Activated CD8-positive, alpha-beta T cell treated with anti-CD3 and anti-CD28 coated beads for 36 hours (primary cell): ENCODE measurements at regions of chr17 and their contacts with region 1.

Region 1: GRCh38 chr17:27236717-27237315 is 57.1 kb upstream of the WSB1 start:
- DNase-seq: peak; percentile 91
- ATAC-seq: peak; percentile 77
- H3K4me3 Mint-ChIP-seq: no peak overlapping the region
- H3K27ac Mint-ChIP-seq: no peak overlapping the region
- H3K4me1 Mint-ChIP-seq: peaks cover 16% of the 10 kb centered on the region
- H3K27me3 Mint-ChIP-seq: peaks cover 3% of the 10 kb centered on the region
- CTCF ChIP-seq: peak; percentile 83

Region 2: GRCh38 chr17:27049104-27049784 is 187.6 kb before region 1 on chr17:
- CTCF ChIA-PET with region 1: no interaction called
- POLR2A ChIA-PET with region 1: no interaction called
- intact Hi-C with region 1: no loop called
- DNase-seq: peak; percentile 46
- ATAC-seq: peak; percentile 64
- H3K4me3 Mint-ChIP-seq: no peak overlapping the region
- H3K27ac Mint-ChIP-seq: no peak overlapping the region
- H3K4me1 Mint-ChIP-seq: no peaks in the 10 kb centered on the region
- H3K27me3 Mint-ChIP-seq: peaks cover 3% of the 10 kb centered on the region
- CTCF ChIP-seq: no peak

Region 3: DNA sequence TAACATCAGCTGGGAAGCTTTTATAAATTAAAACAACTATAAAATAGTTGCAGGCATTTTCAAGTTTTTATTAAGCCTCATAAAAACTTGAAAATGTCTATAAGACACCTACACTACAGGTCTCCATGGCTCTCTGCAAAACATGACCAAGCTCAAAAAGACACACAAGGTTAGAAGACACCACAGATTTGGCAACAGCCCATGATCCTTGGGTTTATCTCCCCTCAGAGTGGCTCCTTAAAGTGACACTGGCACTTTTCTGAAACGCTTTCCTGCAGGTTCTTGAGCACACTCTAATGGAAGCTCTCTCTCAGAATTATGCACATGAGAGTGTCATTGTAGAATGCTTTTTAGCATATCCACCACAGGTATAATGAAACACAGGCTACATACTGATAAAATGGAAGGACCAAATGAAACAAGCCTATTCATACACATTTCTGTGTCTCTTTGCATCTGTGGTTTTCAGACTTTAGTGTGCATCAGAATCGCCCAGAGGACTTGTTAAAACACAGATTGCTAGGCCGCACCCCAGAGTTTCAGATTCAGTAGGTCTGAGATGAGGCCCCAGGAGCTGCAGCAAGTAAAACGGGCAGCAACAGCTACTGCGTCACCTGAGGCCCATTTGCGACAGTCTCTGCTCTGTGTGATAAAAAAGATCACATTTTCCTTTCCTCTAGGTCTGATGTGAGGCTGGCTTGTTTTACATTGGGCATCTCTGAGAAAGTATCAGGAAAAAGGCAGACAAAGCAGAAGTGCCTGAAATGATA is 17.9 kb before region 1 on chr17:
- CTCF ChIA-PET with region 1: interaction called, 14 read pairs
- POLR2A ChIA-PET with region 1: no interaction called
- intact Hi-C with region 1: no loop called
- DNase-seq: peak; percentile 56
- ATAC-seq: peak; percentile 90
- H3K4me3 Mint-ChIP-seq: no peak overlapping the region
- H3K27ac Mint-ChIP-seq: no peak overlapping the region
- H3K4me1 Mint-ChIP-seq: peaks cover 10% of the 10 kb centered on the region
- H3K27me3 Mint-ChIP-seq: no peaks in the 10 kb centered on the region
- CTCF ChIP-seq: no peak

Region 4: GRCh38 chr17:27332485-27333409 is 95.9 kb after region 1 on chr17:
- CTCF ChIA-PET with region 1: interaction called, 149 read pairs
- POLR2A ChIA-PET with region 1: interaction called, 7 read pairs
- intact Hi-C with region 1: no loop called
- DNase-seq: peak; percentile 97
- ATAC-seq: peak; percentile 88
- H3K4me3 Mint-ChIP-seq: peak overlapping the region; percentile 81
- H3K27ac Mint-ChIP-seq: peak overlapping the region; percentile 94
- H3K4me1 Mint-ChIP-seq: peaks cover 25% of the 10 kb centered on the region
- H3K27me3 Mint-ChIP-seq: no peaks in the 10 kb centered on the region
- CTCF ChIP-seq: peak; percentile 86

Region 5: GRCh38 chr17:27353461-27354050 is 116.7 kb after region 1 on chr17:
- CTCF ChIA-PET with region 1: interaction called, 16 read pairs
- POLR2A ChIA-PET with region 1: no interaction called
- intact Hi-C with region 1: no loop called
- DNase-seq: peak; percentile 90
- ATAC-seq: peak; percentile 88
- H3K4me3 Mint-ChIP-seq: peak overlapping the region; percentile 78
- H3K27ac Mint-ChIP-seq: peak overlapping the region; percentile 96
- H3K4me1 Mint-ChIP-seq: peaks cover 25% of the 10 kb centered on the region
- H3K27me3 Mint-ChIP-seq: no peaks in the 10 kb centered on the region
- CTCF ChIP-seq: peak; percentile 90

Region 6: DNA sequence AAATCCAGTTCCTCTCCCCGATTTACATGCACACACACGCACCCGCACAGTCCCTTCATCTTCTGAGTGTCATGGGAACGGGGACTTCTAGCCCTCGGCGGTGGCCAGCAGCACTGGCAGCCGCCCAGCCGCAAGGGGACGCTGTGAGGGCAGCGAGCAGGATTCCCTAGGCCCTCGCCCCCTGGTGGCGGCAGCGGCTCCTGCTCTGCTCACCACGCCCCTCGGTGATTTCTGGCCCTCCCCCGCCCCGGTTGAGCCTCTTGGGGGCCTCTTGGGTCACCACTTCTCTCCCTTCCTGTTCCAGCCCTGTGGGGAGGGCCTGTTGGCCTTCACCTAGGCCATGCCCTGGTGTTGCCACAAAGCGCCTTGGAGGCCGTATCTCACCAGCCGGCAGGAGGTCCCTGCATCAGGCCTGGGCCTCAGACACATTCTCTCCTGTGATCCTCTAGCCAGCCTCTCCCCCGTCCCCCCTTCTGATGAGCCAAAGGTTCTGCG is 144.2 kb after region 1 on chr17:
- CTCF ChIA-PET with region 1: interaction called, 32 read pairs
- POLR2A ChIA-PET with region 1: no interaction called
- intact Hi-C with region 1: no loop called
- DNase-seq: peak; percentile 91
- ATAC-seq: peak; percentile 98
- H3K4me3 Mint-ChIP-seq: no peak overlapping the region
- H3K27ac Mint-ChIP-seq: no peak overlapping the region
- H3K4me1 Mint-ChIP-seq: no peaks in the 10 kb centered on the region
- H3K27me3 Mint-ChIP-seq: peaks cover 11% of the 10 kb centered on the region
- CTCF ChIP-seq: peak; percentile 100

Region 7: DNA sequence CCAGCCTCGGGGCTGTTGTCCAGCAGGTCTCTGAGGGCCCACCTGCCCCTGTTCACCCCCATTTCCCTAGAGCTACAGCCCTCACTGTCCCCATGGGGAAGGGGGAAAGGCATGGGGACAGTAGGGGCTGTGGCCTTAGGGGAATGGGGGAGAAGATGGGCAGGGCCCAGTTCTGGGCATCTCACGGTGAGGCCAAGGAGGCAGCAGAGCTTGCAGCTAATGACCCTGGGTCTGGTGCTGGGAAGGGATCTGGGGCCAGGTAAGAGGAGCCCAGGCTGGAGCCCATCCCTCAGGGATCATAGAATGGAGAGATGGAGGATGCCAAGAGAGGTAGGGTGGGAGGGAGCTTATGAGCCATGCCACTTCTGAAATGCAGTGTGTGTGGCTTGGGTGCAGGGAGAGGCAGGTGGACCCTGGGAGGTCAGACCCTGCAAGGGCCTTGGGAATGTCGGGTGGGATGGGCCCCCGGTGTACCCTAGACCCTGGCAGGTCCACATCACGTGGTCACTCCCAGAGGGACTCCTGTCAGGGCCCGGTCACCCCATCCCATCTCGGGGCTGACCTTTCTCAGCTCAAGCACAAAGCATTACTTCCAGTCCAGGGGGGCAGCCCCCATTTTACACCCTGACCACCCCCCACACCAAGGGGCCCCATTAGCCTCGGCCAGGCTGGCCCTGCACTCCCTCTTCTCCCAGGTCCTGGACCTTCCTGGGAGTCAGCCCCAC is 183.6 kb after region 1 on chr17:
- CTCF ChIA-PET with region 1: no interaction called
- POLR2A ChIA-PET with region 1: no interaction called
- intact Hi-C with region 1: no loop called
- DNase-seq: no peak
- ATAC-seq: no peak
- H3K4me3 Mint-ChIP-seq: no peak overlapping the region
- H3K27ac Mint-ChIP-seq: no peak overlapping the region
- H3K4me1 Mint-ChIP-seq: no peaks in the 10 kb centered on the region
- H3K27me3 Mint-ChIP-seq: no peaks in the 10 kb centered on the region
- CTCF ChIP-seq: no peak

Region 8: DNA sequence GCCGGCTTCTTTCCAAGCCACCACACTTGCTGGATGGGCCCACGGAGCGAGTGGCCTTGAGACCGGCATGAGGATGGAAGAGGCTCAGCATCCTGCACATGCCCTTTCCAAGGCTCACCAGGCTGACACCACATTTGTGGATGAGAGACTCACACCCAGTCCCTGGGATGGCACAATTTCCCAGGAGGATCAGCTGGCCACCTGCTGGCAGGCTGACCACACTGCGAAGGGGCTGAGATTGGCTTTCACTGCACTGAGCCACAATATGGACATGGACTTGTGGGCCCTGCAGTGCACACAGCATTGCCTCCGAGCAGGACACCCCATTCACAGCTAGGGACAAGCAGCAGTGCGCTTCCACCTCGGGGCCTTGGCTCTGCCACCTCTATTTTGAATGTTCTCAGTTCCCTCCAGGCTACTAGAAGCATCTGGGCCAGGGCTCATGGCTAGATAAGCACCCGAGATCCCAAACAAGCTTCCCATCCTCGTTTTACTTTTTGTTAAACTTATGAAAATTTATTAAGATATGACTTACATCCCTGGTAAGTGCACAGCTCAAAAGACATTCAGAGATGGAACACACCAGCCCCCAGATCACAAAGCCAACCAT is 194.2 kb after region 1 on chr17:
- CTCF ChIA-PET with region 1: no interaction called
- POLR2A ChIA-PET with region 1: no interaction called
- intact Hi-C with region 1: no loop called
- DNase-seq: no peak
- ATAC-seq: no peak
- H3K4me3 Mint-ChIP-seq: no peak overlapping the region
- H3K27ac Mint-ChIP-seq: no peak overlapping the region
- H3K4me1 Mint-ChIP-seq: no peaks in the 10 kb centered on the region
- H3K27me3 Mint-ChIP-seq: no peaks in the 10 kb centered on the region
- CTCF ChIP-seq: peak; percentile 14